ENCODE measurements at regions of chr17 and their contacts with region 1.

Region 1: GRCh38 chr17:48153691-48154358 is 46.3 kb downstream of the SNX11 start:
- DNase-seq: no peak
- H3K4me3 ChIP-seq: no peak overlapping the region
- H3K27ac ChIP-seq: no peak overlapping the region
- H3K4me1 ChIP-seq: peaks cover 0 to 12% (median 8%) of the 10 kb centered on the region in 4 experiments; a peak in 2 of 7 replicates
- H3K27me3 ChIP-seq: peaks cover 0 to 7% (median 1%) of the 10 kb centered on the region in 4 experiments; a peak in 3 of 7 replicates
- CTCF ChIP-seq: peak; percentile 47 to 67 (median 53)
- EP300 ChIP-seq: no peak
- POLR2A ChIP-seq: no peak
- RAD21 ChIP-seq: peak; percentile 81 to 83

Region 2: DNA sequence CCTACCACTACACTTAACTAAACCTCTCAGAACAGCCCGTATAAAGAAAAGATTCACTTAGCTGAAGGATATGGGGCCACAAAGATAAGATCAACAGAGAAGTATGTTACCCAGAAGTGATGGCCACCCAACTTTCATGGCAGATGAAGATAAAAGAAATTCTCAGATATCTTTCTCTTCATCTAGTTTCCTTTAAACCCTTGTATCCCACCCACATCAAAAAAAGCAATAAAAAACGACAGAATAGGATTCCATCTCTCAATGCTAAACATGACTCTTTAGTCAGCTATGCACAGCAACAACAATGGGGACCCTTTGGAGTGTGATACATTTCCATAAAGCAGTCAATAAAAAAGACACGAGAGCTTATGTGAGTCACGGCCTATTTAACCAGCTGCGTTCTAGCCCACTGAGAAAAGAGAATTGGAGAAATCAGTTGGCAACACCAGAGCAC is 40.3 kb after region 1 on chr17:
- CTCF ChIA-PET with region 1: interaction called, 10 read pairs
- POLR2A ChIA-PET with region 1: interaction called, 4 read pairs
- DNase-seq: no peak
- H3K4me3 ChIP-seq: no peak overlapping the region
- H3K27ac ChIP-seq: no peak overlapping the region
- H3K4me1 ChIP-seq: peaks cover 0 to 12% (median 7%) of the 10 kb centered on the region in 4 experiments; a peak in 3 of 7 replicates
- H3K27me3 ChIP-seq: peaks cover 0 to 2% (median 0%) of the 10 kb centered on the region in 4 experiments; a peak in 1 of 7 replicates
- CTCF ChIP-seq: no peak
- EP300 ChIP-seq: no peak
- POLR2A ChIP-seq: no peak
- RAD21 ChIP-seq: no peak

Region 3: DNA sequence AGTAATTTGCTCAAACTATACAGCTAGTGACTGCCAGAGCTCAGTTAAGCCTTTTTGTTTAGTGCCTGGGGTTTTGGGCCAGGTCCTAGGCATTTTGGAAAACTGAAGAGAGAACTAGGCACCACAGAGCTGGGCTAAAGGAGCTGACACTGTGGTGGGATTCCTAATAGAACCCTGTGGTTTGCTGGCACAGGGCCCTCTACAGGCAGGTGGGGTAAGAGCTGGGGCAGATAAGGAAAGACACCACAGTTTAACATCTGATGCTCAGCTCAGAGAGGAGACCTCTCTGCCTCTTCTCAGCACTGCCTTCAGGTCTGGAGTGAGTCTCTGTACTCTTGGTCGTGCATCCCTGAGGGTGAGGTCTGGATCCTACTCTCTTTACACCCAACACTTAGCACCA is 74.9 kb after region 1 on chr17:
- CTCF ChIA-PET with region 1: interaction called, 14 read pairs
- POLR2A ChIA-PET with region 1: no interaction called
- DNase-seq: peak; percentile 9 to 60
- H3K4me3 ChIP-seq: no peak overlapping the region
- H3K27ac ChIP-seq: no peak overlapping the region
- H3K4me1 ChIP-seq: peaks cover 0 to 7% (median 3%) of the 10 kb centered on the region in 4 experiments; a peak in 3 of 7 replicates
- H3K27me3 ChIP-seq: peaks cover 0 to 2% (median 0%) of the 10 kb centered on the region in 4 experiments; a peak in 1 of 7 replicates
- CTCF ChIP-seq: peak; percentile 73 to 90 (median 75)
- EP300 ChIP-seq: no peak
- POLR2A ChIP-seq: no peak
- RAD21 ChIP-seq: peak; percentile 30 to 54; a peak in 3 of 4 replicates

Measured in H1 (cell line).